Left ventricle myocardium superior (tissue), 1 donor: ENCODE measurements at regions of chr5 and their contacts with region 1.

Region 1: GRCh38 chr5:36305571-36306326 is 4.0 kb upstream of the RANBP3L start:
- DNase-seq: peak; percentile 58
- ATAC-seq: peak; percentile 74

Region 2: GRCh38 chr5:36269479-36270219 is 36.1 kb before region 1 on chr5:
- intact Hi-C with region 1: loop called (anchors 5 kb)
- DNase-seq: no peak
- ATAC-seq: no peak